A673 (cell line): ENCODE measurements at regions of chr7 and their contacts with region 1.

Region 1: DNA sequence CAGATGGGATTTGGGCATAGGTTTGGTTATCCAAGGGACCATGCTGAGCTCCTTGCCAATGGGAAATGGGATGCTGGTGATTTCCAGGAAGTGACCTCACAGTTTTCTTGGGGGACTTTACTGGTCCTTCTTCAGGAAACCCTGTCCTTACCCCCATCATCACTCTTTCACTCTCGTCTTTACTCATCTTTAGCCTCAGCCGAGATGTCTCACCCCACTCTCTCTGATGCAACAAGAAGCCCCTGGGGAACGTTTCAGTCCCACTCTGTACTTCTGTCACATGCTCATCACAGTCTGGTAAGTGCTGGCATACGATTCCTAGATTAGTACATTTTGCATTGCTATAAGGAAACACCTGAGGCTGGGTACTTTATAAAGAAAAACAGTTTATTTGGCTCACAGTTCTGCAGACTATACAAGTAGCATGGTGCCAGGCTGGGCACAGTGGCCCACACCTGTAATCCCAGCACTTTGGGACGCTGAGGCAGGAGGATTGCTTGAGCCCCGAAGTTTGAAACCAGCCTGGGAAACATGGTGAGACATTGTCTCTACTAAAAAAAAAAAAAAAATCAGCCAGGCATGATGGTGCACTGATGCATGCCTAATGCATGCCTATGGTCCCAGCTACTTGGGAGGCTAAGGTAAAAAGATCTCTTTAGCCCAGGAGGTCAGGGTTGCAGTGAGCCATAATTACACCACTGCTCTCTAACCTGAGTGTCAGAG is 63.5 kb upstream of the VKORC1L1 start:
- DNase-seq: no peak
- H3K4me3 ChIP-seq: no peak overlapping the region
- H3K27ac ChIP-seq: no peak overlapping the region
- H3K4me1 ChIP-seq: no peaks in the 10 kb centered on the region
- H3K27me3 ChIP-seq: no peaks in the 10 kb centered on the region
- CTCF ChIP-seq: no peak

Region 2: GRCh38 chr7:66974986-66975590 is 1165.7 kb after region 1 on chr7:
- CTCF ChIA-PET with region 1: no interaction called
- POLR2A ChIA-PET with region 1: interaction called, 20 read pairs
- intact Hi-C with region 1: no loop called
- DNase-seq: peak; percentile 45
- H3K4me3 ChIP-seq: no peak overlapping the region
- H3K27ac ChIP-seq: no peak overlapping the region
- H3K4me1 ChIP-seq: no peaks in the 10 kb centered on the region
- H3K27me3 ChIP-seq: no peaks in the 10 kb centered on the region
- CTCF ChIP-seq: no peak